Activated CD4-positive, alpha-beta T cell treated with anti-CD3 and anti-CD28 coated beads, Interleukin-2, amount 10 ng/mL, durations not matched to agents 24 days and 14 days (primary cell): ENCODE measurements at regions of chr1 and their contacts with region 1.

Region 1: DNA sequence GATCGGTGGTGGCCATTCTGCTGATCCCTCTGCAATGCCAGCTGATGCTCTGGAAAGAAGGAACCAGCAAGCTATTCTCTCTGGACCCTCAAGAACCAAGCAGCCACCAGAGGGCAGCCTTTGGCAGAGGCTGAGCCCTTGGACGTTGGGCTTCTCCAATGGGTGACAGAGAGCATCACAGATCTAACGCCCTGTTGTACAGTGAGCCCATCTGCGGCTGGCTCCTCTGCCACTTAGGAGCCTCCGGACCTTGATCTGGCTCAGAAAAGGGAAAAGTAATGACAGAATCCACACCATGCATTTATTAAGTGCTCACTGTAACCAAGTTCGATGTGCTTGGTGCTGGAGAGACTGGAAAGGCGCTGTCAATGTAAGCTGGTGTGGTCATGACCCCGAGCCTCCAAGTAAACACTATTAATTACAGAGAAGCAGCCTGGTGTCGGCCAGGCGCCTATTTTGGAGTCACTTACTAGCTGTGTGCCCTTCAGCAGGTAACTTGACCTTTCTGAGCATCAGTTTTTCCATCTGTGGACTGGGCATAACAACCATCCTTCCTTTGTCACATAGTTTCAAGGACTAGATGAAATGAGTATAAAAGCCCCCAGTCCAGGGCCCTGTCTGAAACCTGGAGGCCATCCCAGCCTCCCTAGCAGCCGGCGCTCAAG is 34.9 kb downstream of the ECE1 start:
- DNase-seq: peak; percentile 94
- H3K4me3 Mint-ChIP-seq: no peak overlapping the region
- H3K27ac Mint-ChIP-seq: peak overlapping the region; percentile 82
- H3K4me1 Mint-ChIP-seq: peaks cover 31% of the 10 kb centered on the region
- H3K27me3 Mint-ChIP-seq: no peaks in the 10 kb centered on the region

Region 2: DNA sequence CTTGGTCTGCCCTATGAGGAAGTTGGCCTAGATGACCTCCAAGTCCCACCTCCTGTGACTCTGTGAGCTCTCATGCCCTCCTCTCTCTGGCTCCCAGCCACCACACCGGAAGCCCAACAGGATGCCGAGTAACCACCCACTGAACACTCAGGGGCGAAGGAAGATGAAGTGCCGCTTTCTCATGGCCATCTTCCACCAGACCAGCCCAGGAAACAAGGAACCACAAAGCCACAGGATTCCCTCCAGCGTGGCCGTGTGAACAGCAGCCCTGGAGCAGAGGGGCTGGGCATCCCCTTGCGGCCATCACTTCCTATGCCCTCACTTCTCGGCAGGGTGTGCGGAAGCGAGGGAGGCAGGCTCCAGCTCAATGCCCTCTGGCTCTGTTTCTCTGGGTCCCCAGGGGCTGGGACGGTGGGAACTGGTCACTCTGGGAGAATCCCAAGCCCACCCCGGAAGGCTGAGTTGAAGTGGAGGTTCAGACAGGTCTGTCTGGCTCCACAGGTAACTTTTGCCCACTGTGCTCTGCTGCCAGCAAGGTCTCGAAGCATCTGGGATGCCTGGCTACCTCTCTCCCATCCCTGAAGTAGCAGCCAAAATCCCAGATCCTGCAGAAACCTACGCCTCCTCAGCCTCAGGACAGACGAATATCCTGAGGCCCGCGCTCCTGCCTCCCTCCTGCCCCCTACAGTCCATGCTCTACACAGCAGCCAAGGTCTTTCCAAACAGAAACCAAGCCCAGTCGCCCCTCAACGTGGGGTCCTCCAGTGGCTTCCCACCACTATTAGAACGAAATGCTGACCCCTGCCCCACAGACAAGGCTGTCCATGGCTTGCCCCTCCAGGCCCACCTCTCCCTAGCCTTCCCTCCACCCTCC is 79.0 kb after region 1 on chr1:
- intact Hi-C with region 1: loop called (anchors 2 kb)
- DNase-seq: peak; percentile 95
- H3K4me3 Mint-ChIP-seq: peak overlapping the region; percentile 80
- H3K27ac Mint-ChIP-seq: peak overlapping the region; percentile 96
- H3K4me1 Mint-ChIP-seq: peaks cover 78% of the 10 kb centered on the region
- H3K27me3 Mint-ChIP-seq: no peaks in the 10 kb centered on the region